ENCODE measurements at regions of chr1 and their contacts with region 1.

Region 1: DNA sequence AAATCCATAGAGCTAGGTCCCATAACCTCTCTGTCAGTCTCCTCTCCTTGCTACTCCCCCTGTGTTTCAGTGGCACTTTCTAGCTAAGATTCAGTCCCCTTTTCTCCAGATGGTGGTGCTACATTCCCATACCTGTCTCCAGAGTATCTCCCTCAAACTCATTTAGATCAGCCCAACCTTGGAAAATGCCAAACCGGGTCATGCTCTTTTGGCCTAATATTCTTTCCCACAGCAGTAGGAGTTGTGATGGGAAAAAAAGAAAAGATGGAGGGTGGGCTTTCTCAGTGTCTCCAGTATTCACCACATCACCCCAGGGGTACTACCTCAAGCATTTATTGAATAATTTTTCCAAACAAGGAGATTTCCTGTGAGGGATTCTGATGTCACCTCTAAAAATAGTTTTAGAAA is 3.2 kb upstream of the RXFP4 start:
- DNase-seq: no peak
- ATAC-seq: peak; percentile 41 to 61 (median 54)
- H3K4me3 ChIP-seq: no peak overlapping the region
- H3K27ac ChIP-seq: no peak overlapping the region
- H3K4me1 ChIP-seq: peaks cover 0 to 11% (median 5%) of the 10 kb centered on the region in 4 donors
- H3K27me3 ChIP-seq: no peaks in the 10 kb centered on the region
- CTCF ChIP-seq: peak; percentile 55 to 69 (median 61)
- POLR2A ChIP-seq: no peak

Region 2: GRCh38 chr1:155744711-155745283 is 193.4 kb before region 1 on chr1:
- intact Hi-C with region 1: no loop called
- DNase-seq: no peak
- ATAC-seq: no peak
- H3K4me3 ChIP-seq: peak overlapping the region; percentile 58 to 71 (median 61)
- H3K27ac ChIP-seq: peak overlapping the region in 2 of 3 donors; percentile 28 to 29
- H3K4me1 ChIP-seq: peaks cover 0 to 5% (median 0%) of the 10 kb centered on the region in 4 donors
- H3K27me3 ChIP-seq: no peaks in the 10 kb centered on the region
- CTCF ChIP-seq: no peak
- POLR2A ChIP-seq: no peak

Region 3: DNA sequence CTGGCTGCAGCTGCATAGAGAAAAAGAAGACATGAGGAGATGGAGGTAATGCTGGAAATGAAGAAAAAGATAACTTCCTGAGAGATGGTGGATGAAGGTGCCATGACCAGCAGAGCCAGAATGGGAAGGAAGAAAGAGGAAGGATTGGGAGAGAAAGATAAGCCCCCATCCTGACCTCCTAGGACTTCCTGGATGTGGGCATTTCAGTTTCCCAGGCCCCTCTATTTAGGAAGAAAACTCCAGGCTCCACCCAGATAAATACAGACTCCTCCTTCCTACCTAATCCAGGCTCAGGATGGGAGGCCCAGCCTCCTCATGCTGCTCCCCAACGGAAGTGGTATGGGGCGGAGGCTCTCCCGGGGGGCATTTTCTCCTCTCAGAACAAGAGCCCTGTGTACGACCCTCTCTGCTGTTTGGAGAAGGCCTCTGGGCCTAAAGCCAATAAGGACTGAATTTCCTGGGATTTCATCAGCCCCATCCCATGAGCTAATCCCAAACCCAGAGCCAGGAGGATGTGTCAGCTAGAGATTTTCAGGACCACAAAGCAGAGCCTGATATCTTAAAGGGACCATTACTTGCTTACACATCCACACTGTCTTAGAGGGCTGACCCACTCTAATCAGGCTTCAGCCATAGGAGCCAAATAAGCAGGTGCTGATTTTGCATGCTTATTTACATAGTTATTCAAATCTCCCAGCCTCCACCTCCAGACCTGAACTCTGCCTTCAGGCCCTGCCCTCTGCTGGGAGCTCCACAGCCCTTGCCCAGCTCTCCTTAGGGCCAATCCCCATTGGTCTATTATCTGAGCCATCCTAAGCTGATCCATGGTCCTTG is 45.2 kb after region 1 on chr1:
- intact Hi-C with region 1: loop called (anchors 5 kb)
- DNase-seq: no peak
- ATAC-seq: peak in 3 of 4 donors; percentile 20 to 28 (median 25)
- H3K4me3 ChIP-seq: no peak overlapping the region
- H3K27ac ChIP-seq: no peak overlapping the region
- H3K4me1 ChIP-seq: no peaks in the 10 kb centered on the region
- H3K27me3 ChIP-seq: no peaks in the 10 kb centered on the region
- CTCF ChIP-seq: no peak
- POLR2A ChIP-seq: no peak

Region 4: DNA sequence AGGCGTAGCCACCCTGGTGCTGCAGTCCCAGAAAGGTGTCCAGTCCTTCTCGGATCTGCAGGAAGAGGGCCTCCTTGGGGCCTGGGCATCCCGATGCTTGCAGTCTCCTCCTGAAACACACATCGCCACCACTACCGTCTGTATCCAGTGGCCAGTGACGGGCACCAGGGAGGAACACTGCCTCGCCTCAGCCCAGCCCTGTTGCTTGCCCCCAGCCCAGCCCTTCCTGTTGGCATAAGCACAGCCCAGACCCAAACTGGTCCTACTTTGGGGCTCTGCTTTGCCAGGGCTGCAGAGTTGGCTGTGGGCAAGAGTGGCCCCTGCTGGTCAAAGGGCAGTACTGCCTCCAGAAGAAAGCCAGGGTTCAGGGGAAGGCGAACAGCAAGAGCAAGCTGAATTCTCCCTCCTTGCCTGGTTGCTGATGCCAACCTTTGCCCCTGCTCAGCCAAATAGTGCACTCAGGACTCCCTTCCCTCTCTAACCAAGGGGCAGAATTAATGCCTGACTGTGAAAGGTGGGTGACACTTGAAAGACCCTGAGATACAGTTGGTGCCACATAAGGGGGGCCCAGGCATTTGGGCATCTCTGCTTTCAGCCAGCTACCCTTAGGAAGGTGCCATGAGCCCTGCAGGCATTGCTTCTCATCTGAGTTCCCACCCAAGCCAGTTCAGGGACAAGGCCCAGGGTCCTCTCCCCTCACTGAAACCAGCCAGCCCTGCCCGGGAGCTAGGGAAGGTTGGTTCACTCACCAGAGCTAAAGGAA is 51.2 kb after region 1 on chr1:
- intact Hi-C with region 1: loop called (anchors 5 kb)
- DNase-seq: peak; percentile 73 to 80 (median 75)
- ATAC-seq: peak; percentile 81 to 90 (median 88)
- H3K4me3 ChIP-seq: no peak overlapping the region
- H3K27ac ChIP-seq: peak overlapping the region in 1 of 3 donors; percentile 30
- H3K4me1 ChIP-seq: peaks cover 0 to 23% (median 11%) of the 10 kb centered on the region in 4 donors
- H3K27me3 ChIP-seq: no peaks in the 10 kb centered on the region
- CTCF ChIP-seq: peak; percentile 96 to 98 (median 97)
- POLR2A ChIP-seq: no peak

Region 5: GRCh38 chr1:156020292-156021089 is 82.3 kb after region 1 on chr1 and contains the start of gene SSR2:
- intact Hi-C with region 1: no loop called
- DNase-seq: peak; percentile 84 to 92 (median 87)
- ATAC-seq: peak; percentile 99 to 100 (median 99)
- H3K4me3 ChIP-seq: peak within 1 kb of the TSS; percentile 86 to 88 (median 87)
- H3K27ac ChIP-seq: peak within 1 kb of the TSS; percentile 52 to 75 (median 68)
- H3K4me1 ChIP-seq: peaks cover 0 to 8% (median 3%) of the 10 kb centered on the region in 4 donors
- H3K27me3 ChIP-seq: no peaks in the 10 kb centered on the region
- CTCF ChIP-seq: no peak
- POLR2A ChIP-seq: peak; percentile 44
- total RNA-seq, gene SSR2: 59.5 to 227 (median 103) TPM

Measured in right lobe of liver (tissue), 6 donors.